Activated naive CD4-positive, alpha-beta T cell treated with anti-CD3 and anti-CD28 coated beads for 36 hours (primary cell): ENCODE measurements at regions of chr18 and their contacts with region 1.

Region 1: GRCh38 chr18:77101410-77102258 is 30.9 kb downstream of the MBP start:
- DNase-seq: peak; percentile 82
- H3K4me3 Mint-ChIP-seq: peak overlapping the region; percentile 50
- H3K27ac Mint-ChIP-seq: peak overlapping the region; percentile 98
- H3K4me1 Mint-ChIP-seq: peaks cover 92% of the 10 kb centered on the region
- H3K27me3 Mint-ChIP-seq: no peaks in the 10 kb centered on the region

Region 2: DNA sequence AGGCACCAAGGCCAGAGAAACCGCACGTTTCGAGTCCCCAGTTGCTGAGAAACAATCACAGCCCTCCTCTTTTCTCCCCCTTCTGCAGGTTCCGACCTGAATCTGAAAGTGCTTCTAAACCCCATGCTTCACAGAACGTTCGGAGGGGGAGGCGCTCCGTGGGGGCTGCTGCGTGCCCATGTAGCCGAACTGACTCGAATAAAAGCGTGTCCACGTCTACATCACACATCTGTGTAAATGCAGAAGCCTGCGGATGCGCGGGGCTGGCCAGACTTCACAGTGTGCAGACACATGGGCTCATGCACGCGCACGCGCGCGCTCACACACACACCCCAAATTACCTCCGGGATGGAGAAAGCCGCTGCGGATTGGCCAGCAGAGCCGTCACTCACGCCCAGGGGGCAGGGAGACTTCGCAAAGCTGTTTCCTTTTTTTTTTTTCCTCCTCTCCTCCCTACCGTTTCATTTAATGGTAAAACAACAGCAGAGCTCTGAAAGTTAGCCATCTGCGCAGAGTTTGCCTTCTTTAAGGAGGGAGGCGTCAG is 608.9 kb before region 1 on chr18:
- CTCF ChIA-PET with region 1: no interaction called
- intact Hi-C with region 1: loop called (anchors 10 kb)
- DNase-seq: peak; percentile 100
- H3K4me3 Mint-ChIP-seq: peak overlapping the region; percentile 93
- H3K27ac Mint-ChIP-seq: peak overlapping the region; percentile 74
- H3K4me1 Mint-ChIP-seq: peaks cover 23% of the 10 kb centered on the region
- H3K27me3 Mint-ChIP-seq: peaks cover 14% of the 10 kb centered on the region

Region 3: DNA sequence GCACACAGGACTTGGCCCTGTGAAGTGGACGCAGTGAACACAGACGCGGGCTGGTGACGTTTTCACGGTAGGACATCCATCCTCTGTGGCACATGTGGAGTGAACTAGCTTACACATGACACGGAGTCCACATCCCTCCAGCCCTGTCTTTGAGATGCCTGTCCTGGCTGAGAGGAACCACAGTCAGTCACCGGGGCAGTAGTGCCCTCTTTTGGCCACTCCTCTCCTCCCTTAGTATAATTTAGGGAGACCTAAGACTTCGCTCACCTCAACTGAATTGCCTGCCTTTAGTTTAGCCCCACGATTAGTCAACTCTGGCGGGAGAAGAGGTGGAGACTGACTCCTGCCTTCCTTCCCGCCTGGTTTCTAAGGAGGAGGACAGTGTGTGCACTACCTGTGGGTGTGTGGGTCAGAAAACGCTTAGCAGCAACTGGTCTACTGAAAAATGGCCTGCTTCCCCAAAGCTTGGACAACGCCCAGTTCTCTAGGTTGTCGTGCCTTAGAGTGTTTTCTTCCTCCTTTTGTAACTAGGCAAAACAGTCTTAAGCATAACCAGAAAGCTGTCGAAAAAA is 39.6 kb before region 1 on chr18:
- CTCF ChIA-PET with region 1: interaction called, 11 read pairs
- intact Hi-C with region 1: loop called (anchors 1 kb)
- DNase-seq: peak; percentile 55
- H3K4me3 Mint-ChIP-seq: peak overlapping the region; percentile 11
- H3K27ac Mint-ChIP-seq: peak overlapping the region; percentile 98
- H3K4me1 Mint-ChIP-seq: peaks cover 78% of the 10 kb centered on the region
- H3K27me3 Mint-ChIP-seq: no peaks in the 10 kb centered on the region

Region 4: DNA sequence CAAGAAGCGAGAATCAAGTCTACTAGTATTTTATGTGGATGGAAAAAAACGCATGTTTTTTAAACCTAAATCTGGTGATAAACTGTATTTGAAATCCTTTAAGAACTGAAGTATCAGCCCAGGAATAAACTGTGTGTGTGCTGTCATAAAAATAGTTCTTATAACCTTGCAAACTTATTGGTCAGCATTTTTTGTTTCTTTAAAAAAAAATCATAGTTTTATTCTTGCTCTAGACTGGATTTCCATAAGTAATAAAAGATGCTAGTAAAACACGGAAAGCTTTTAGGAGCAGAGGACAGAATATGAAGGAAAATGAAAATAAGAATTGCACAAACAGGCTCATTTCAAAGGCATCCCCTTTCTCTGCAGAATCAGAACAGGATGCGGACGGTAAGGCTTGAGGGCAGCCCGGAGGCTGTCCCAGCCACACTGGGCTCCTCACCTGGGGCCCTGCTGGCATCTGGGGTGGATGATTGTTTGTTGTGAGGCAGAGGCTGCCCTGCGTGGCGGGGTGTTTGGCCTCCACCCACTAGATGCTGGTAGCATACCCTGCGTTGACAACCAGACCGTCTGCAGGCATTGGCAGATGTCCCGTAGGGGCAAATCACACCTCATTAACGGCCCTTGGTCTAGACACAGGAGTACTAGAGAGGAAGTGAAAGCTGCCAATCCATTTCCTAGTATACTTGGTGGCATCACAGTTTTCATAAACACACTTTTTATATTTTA is 21.5 kb before region 1 on chr18:
- CTCF ChIA-PET with region 1: interaction called, 3 read pairs
- intact Hi-C with region 1: loop called (anchors 2 kb)
- DNase-seq: no peak
- H3K4me3 Mint-ChIP-seq: no peak overlapping the region
- H3K27ac Mint-ChIP-seq: no peak overlapping the region
- H3K4me1 Mint-ChIP-seq: peaks cover 57% of the 10 kb centered on the region
- H3K27me3 Mint-ChIP-seq: no peaks in the 10 kb centered on the region

Region 5: DNA sequence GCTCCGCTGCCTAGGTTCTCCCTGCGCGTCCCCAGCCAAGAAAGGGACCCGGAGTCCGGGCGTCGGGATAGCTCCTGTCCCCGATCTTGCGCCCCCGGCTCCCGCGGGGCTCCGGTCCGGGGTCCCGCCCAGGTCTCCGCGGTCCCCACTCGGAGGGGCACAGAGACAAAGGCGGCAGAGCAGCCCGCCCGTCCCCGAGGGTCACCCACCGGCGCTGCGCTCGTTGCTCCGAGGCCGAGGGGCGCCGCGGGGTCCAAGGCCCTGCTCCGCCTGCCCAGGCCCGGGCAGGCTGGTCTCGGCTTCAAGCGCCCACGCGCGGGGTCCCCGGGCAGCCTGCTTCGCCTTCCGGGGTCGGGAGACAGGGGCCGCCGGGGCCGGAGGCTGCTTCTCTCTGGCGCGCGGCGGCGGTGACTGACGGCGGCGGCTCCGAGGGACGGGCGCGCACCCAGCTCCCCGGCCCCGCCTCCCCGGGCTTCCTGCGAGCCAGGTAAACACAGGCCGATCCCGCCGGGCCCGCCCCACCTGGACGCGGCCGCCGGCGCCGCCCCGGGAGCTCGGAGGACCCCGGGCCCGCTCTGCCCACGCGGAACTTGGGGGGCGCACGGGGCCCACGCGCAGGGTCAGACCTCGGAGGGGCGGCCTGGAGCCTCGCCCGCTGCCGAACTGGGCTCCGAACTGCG is 30.9 kb after region 1 on chr18 and contains the start of gene MBP:
- CTCF ChIA-PET with region 1: interaction called, 6 read pairs
- intact Hi-C with region 1: loop called (anchors 1 kb)
- DNase-seq: peak; percentile 78
- H3K4me3 Mint-ChIP-seq: peak within 1 kb of the TSS; percentile 90
- H3K27ac Mint-ChIP-seq: peak within 1 kb of the TSS; percentile 93
- H3K4me1 Mint-ChIP-seq: peaks cover 53% of the 10 kb centered on the region
- H3K27me3 Mint-ChIP-seq: no peaks in the 10 kb centered on the region
- total RNA-seq, gene MBP: 35.9 to 36.6 TPM

Region 6: DNA sequence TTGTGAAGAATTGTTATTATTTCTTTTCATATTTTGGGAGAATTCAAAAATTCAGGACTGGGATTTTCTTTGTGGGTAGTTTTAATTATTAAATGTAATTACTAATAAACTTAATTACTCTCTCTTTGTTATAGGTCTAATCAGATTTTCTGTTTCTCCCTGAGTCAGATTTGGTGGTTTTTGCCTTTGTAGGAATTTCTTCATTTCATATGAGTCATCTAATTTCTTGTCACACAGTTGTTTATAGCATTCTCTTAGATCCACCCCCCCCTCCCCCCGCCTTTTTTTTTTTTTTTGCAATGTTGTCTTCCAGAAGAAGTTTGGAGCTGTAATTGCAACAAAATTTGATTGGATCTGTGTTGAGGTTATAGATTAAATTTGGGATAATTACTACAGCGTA is 122.0 kb after region 1 on chr18:
- CTCF ChIA-PET with region 1: no interaction called
- intact Hi-C with region 1: loop called (anchors 1 kb)
- DNase-seq: no peak
- H3K4me3 Mint-ChIP-seq: no peak overlapping the region
- H3K27ac Mint-ChIP-seq: no peak overlapping the region
- H3K4me1 Mint-ChIP-seq: peaks cover 15% of the 10 kb centered on the region
- H3K27me3 Mint-ChIP-seq: peaks cover 1% of the 10 kb centered on the region